Activated CD4-positive, alpha-beta memory T cell treated with anti-CD3 and anti-CD28 coated beads for 36 hours (primary cell): ENCODE measurements at regions of chr12 and their contacts with region 1.

Region 1: DNA sequence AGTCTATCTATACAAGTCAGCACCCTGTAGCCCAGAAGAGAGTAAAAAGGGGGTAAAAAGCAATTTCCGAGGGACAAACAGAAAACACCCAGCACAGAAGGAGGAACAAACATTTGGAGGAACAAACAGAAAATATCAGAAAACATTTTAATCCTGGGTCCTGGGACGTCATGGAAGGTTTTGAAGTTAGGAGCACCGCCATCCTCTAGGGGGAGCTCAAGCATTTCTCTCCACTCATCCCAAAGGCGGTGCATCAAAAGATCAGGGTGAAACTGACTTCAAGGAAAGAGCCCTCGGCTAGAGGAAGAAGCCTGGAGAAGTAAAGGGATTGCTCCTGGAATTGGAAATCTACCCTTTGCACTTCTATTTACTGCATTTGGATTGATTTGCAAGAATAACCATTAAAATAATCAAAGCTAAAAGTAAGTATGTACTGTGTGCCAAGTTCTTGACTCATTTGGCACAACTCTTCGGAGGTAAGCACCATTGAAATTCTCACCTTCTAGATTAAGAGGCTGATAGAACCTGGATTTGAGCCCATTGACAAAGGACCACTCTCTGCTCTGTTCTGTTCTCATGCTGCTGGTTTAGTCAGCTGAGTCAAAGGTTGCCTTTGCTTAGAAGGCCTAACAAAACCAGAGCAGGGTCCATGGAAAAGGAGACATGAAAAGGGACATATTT is 17.2 kb upstream of the POC1B start:
- DNase-seq: peak; percentile 75
- H3K4me3 Mint-ChIP-seq: no peak overlapping the region
- H3K27ac Mint-ChIP-seq: no peak overlapping the region
- H3K4me1 Mint-ChIP-seq: peaks cover 4% of the 10 kb centered on the region
- H3K27me3 Mint-ChIP-seq: no peaks in the 10 kb centered on the region

Region 2: GRCh38 chr12:89862511-89863179 is 319.6 kb after region 1 on chr12:
- CTCF ChIA-PET with region 1: no interaction called
- POLR2A ChIA-PET with region 1: no interaction called
- intact Hi-C with region 1: loop called (anchors 5 kb)
- DNase-seq: peak; percentile 57
- H3K4me3 Mint-ChIP-seq: peak overlapping the region; percentile 66
- H3K27ac Mint-ChIP-seq: peak overlapping the region; percentile 95
- H3K4me1 Mint-ChIP-seq: peaks cover 67% of the 10 kb centered on the region
- H3K27me3 Mint-ChIP-seq: no peaks in the 10 kb centered on the region

Region 3: DNA sequence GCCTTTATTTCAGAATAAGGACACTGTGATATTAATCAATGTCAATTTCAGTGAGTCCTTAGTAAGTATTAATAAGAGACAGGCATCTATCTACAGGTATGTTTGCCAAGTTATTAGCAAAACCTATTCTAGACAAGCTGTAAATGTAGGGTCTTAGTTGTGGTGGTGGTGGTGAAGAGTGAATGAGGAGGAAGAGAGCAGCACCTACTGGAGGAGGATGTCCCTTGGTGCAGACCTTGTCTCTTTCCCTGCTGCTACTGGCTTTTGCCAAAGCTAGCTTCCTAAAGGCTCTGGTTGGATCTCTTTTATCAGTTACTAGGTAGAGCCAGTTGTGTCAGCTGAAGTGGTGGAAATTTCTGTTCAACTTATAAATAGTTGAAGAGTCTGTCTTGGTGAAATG is 470.4 kb after region 1 on chr12:
- CTCF ChIA-PET with region 1: no interaction called
- POLR2A ChIA-PET with region 1: no interaction called
- intact Hi-C with region 1: loop called (anchors 2 kb)
- DNase-seq: no peak
- H3K4me3 Mint-ChIP-seq: no peak overlapping the region
- H3K27ac Mint-ChIP-seq: no peak overlapping the region
- H3K4me1 Mint-ChIP-seq: peaks cover 3% of the 10 kb centered on the region
- H3K27me3 Mint-ChIP-seq: no peaks in the 10 kb centered on the region

Region 4: DNA sequence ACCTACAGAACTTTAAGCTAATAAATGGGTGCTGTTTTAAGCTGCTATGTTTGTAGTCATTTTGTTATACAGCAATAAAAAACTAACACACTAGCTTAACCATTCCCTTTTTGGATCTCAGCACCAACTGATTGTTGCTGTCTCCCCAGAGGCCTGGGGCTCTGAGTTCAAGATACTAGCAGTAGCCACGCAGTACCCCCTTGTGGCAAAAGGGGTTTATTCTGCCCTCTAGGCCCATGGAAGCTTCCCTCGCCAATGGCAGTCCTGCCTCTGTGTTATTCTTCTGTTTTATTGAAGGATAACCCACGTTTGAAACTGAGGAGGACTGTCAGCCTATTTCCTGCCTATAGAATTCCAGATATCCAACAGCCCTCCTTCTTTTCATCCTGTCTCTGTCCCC is 620.9 kb after region 1 on chr12:
- CTCF ChIA-PET with region 1: interaction called, 4 read pairs
- POLR2A ChIA-PET with region 1: no interaction called
- intact Hi-C with region 1: loop called (anchors 5 kb)
- DNase-seq: peak; percentile 20
- H3K4me3 Mint-ChIP-seq: no peak overlapping the region
- H3K27ac Mint-ChIP-seq: no peak overlapping the region
- H3K4me1 Mint-ChIP-seq: no peaks in the 10 kb centered on the region
- H3K27me3 Mint-ChIP-seq: peaks cover 2% of the 10 kb centered on the region

Region 5: DNA sequence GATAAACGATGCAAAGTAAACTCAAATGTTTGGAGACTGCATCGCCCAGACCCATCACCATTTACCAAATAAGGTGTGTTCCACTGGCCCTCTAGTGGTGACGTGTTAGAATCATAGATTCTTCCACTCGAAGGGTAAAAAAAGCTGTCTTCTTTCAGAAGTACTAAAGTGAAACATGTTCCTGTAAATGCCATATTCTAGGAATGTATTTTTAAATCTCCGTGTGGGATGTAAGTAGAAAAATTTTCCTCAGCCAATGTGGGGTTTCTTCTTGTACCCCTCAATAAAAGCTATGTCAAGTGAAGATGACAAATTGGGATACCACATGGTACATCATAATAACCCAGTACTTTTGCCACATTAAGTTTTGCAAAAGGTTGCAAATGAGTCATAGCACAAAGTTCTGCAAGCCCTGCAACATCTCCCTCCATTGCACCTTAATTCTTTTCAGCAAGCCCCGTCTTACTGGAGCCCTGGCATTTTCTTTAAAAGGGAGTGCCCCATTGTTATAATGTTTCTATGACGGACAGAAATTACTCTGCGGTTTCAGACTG is 1311.2 kb after region 1 on chr12:
- CTCF ChIA-PET with region 1: interaction called, 6 read pairs
- POLR2A ChIA-PET with region 1: no interaction called
- intact Hi-C with region 1: loop called (anchors 5 kb)
- DNase-seq: no peak
- H3K4me3 Mint-ChIP-seq: no peak overlapping the region
- H3K27ac Mint-ChIP-seq: no peak overlapping the region
- H3K4me1 Mint-ChIP-seq: no peaks in the 10 kb centered on the region
- H3K27me3 Mint-ChIP-seq: peaks cover 1% of the 10 kb centered on the region